Activated CD4-positive, alpha-beta T cell treated with anti-CD3 and anti-CD28 coated beads, Interleukin-2, amount 10 ng/mL, durations not matched to agents 7 days and 5 days (primary cell): ENCODE measurements at regions of chr12 and their contacts with region 1.

Region 1: DNA sequence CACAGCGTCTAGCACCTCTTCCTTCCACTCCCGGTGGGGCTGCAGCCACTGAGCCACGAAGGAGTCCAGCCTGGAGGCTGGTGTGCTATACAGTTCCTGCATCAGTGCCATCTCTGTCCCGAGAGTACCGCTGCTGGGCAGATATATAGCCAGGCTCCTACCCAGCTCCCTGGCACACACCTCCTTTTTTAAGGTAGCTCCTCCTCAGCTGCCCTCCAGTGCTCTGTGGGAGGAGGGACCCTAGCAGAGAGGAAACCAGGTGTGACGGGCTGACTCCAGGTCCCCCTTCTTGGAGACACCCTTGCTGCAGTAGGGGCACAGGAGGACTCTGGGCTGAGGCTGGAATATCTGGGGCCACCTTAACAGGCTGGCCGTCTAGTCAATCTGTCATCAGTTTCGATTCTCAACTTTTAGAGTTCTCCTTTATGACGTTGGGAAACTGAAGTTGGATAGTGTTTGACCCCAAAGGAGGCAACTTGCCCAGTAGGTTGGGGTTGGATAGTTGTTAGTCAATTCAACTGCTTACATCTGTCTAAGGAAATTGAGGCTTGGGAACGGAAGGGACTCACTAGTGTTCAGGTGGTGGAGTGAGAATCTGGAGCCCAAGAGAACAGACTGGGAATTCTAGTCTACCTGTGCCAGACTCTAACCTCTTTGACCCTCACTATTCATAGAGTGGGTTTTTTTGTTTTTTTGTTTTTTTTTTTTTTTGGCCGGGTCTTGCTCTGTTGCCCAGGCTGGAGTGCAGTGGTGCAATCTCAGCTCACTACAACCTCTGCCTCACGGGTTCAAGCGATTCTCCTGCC is at the start of gene OASL:
- DNase-seq: peak; percentile 75
- H3K4me3 Mint-ChIP-seq: peak within 1 kb of the TSS; percentile 98
- H3K27ac Mint-ChIP-seq: peak within 1 kb of the TSS; percentile 94
- H3K4me1 Mint-ChIP-seq: peaks cover 46% of the 10 kb centered on the region
- H3K27me3 Mint-ChIP-seq: peaks cover 17% of the 10 kb centered on the region
- total RNA-seq, gene OASL: 28.5 to 34.2 TPM

Region 2: DNA sequence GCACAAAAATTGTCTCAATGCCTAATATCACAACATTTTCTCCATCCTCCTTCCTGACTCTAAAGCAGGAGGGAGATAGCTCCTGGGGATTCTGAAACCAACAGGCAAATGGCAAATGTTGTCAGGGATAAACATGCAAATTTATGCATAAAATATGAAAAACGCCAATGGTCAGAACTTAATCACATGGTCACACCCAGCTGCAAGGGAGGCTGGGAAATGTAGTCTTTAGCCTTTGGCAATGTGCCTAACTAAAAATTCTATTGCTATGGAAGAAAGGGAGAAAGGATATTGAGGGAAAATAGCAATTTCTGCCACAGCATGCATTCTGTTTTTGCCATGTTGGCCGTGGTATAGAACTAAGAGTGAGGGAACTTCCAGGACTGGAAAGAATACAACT is 11.7 kb after region 1 on chr12:
- CTCF ChIA-PET with region 1: interaction called, 17 read pairs
- POLR2A ChIA-PET with region 1: no interaction called
- DNase-seq: no peak
- H3K4me3 Mint-ChIP-seq: no peak overlapping the region
- H3K27ac Mint-ChIP-seq: no peak overlapping the region
- H3K4me1 Mint-ChIP-seq: peaks cover 10% of the 10 kb centered on the region
- H3K27me3 Mint-ChIP-seq: peaks cover 11% of the 10 kb centered on the region